ENCODE measurements at regions of chr16 and their contacts with region 1.

Region 1: GRCh38 chr16:28846080-28846932 is at the start of gene TUFM:
- DNase-seq: peak; percentile 99
- ATAC-seq: peak; percentile 92
- H3K4me3 Mint-ChIP-seq: peak within 1 kb of the TSS; percentile 92
- H3K27ac Mint-ChIP-seq: peak within 1 kb of the TSS; percentile 94
- H3K4me1 Mint-ChIP-seq: peaks cover 27% of the 10 kb centered on the region
- H3K27me3 Mint-ChIP-seq: no peaks in the 10 kb centered on the region
- total RNA-seq, gene TUFM: 150 to 153 TPM

Region 2: GRCh38 chr16:28473714-28474265 is 372.5 kb before region 1 on chr16:
- CTCF ChIA-PET with region 1: no interaction called
- POLR2A ChIA-PET with region 1: no interaction called
- DNase-seq: no peak
- ATAC-seq: no peak
- H3K4me3 Mint-ChIP-seq: no peak overlapping the region
- H3K27ac Mint-ChIP-seq: peak overlapping the region; percentile 30
- H3K4me1 Mint-ChIP-seq: peaks cover 5% of the 10 kb centered on the region
- H3K27me3 Mint-ChIP-seq: no peaks in the 10 kb centered on the region

Region 3: GRCh38 chr16:28823872-28824716 is 22.2 kb before region 1 on chr16:
- CTCF ChIA-PET with region 1: interaction called, 4 read pairs
- POLR2A ChIA-PET with region 1: interaction called, 49 read pairs
- DNase-seq: peak; percentile 98
- ATAC-seq: peak; percentile 76
- H3K4me3 Mint-ChIP-seq: peak overlapping the region; percentile 93
- H3K27ac Mint-ChIP-seq: peak overlapping the region; percentile 96
- H3K4me1 Mint-ChIP-seq: peaks cover 45% of the 10 kb centered on the region
- H3K27me3 Mint-ChIP-seq: no peaks in the 10 kb centered on the region